Cardiac septum (tissue), 1 donor: ENCODE measurements at regions of chr2 and their contacts with region 1.

Region 1: DNA sequence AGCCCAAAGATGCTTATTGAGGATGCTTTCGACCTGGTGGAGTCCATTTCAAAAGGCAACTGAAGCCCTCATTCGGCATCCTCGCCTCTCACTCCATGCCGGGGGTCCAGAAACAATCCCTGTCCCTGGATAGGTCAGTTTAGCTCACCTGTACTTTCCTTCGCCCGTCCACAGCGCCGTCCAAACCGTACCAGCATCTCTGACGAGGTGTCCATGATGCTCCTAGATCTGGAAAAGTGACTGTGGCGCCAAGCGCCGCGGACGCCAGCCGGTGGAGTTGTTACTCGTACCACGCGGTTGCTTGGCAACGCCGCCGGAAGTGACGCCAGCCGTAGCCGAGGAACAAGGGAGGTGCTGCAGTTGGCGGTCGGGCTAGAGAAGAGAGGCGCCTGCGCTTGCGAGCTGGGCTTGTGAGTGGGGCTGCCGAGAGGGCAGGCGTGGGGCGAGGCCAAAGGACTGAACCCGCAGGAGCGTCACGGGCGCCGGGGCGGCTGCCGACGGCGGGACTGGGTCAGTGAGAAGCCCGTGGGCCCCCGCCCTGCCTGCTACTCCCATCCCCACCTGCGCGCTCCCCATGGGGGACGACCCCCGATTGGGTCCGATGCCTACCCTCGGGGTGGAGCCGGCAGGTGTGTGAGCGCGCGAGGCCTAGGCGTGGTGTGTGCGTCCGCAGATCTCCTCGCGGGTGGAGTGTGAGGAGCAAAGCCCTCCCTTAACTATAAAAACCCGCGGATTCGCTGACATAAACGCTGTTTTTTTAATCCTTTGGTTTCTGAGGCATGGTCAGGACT is at the starts of genes CFAP210 and PHOSPHO2:
- DNase-seq: peak; percentile 99
- total RNA-seq, gene CFAP210: not detected
- total RNA-seq, gene PHOSPHO2: 2.2 TPM

Region 2: GRCh38 chr2:169584005-169584877 is 110.1 kb before region 1 on chr2 and contains the start of gene PPIG:
- intact Hi-C with region 1: loop called (anchors 5 kb)
- DNase-seq: peak; percentile 96
- total RNA-seq, gene PPIG: 40.6 TPM

Region 3: GRCh38 chr2:169734169-169734847 is 40.0 kb after region 1 on chr2:
- intact Hi-C with region 1: loop called (anchors 5 kb)
- DNase-seq: no peak